Sigmoid colon (tissue), 7 donors: ENCODE measurements at regions of chr12 and their contacts with region 1.

Region 1: GRCh38 chr12:21891751-21892217 is 49.4 kb downstream of the ABCC9 start:
- DNase-seq: peak; percentile 93
- H3K4me3 ChIP-seq: no peak overlapping the region
- H3K27ac ChIP-seq: peak overlapping the region; percentile 73 to 82 (median 76)
- H3K4me1 ChIP-seq: peaks cover 0 to 65% (median 49%) of the 10 kb centered on the region in 4 donors
- H3K27me3 ChIP-seq: no peaks in the 10 kb centered on the region
- CTCF ChIP-seq: no peak
- EP300 ChIP-seq: peak; percentile 7 to 57 (median 34)
- POLR2A ChIP-seq: no peak

Region 2: GRCh38 chr12:21599143-21599999 is 292.4 kb before region 1 on chr12:
- intact Hi-C with region 1: no loop called
- DNase-seq: no peak
- H3K4me3 ChIP-seq: no peak overlapping the region
- H3K27ac ChIP-seq: no peak overlapping the region
- H3K4me1 ChIP-seq: no peaks in the 10 kb centered on the region
- H3K27me3 ChIP-seq: no peaks in the 10 kb centered on the region
- CTCF ChIP-seq: no peak
- EP300 ChIP-seq: no peak
- POLR2A ChIP-seq: no peak

Region 3: GRCh38 chr12:21831791-21832344 is 59.9 kb before region 1 on chr12:
- intact Hi-C with region 1: loop called (anchors 5 kb)
- DNase-seq: peak; percentile 89
- H3K4me3 ChIP-seq: no peak overlapping the region
- H3K27ac ChIP-seq: peak overlapping the region; percentile 59 to 74 (median 68)
- H3K4me1 ChIP-seq: peaks cover 0 to 53% (median 28%) of the 10 kb centered on the region in 4 donors
- H3K27me3 ChIP-seq: no peaks in the 10 kb centered on the region
- CTCF ChIP-seq: no peak
- EP300 ChIP-seq: peak in 1 of 4 donors; percentile 54
- POLR2A ChIP-seq: no peak

Region 4: GRCh38 chr12:21971344-21971743 is 79.6 kb after region 1 on chr12:
- intact Hi-C with region 1: no loop called
- DNase-seq: no peak
- H3K4me3 ChIP-seq: no peak overlapping the region
- H3K27ac ChIP-seq: no peak overlapping the region
- H3K4me1 ChIP-seq: no peaks in the 10 kb centered on the region
- H3K27me3 ChIP-seq: no peaks in the 10 kb centered on the region
- CTCF ChIP-seq: no peak
- EP300 ChIP-seq: no peak
- POLR2A ChIP-seq: no peak